ENCODE measurements at regions of chr11 and their contacts with region 1.

Region 1: GRCh38 chr11:58788355-58789023 is 56.0 kb downstream of the GLYATL2 start:
- DNase-seq: peak; percentile 34
- ATAC-seq: peak; percentile 98
- H3K4me3 ChIP-seq: no peak overlapping the region
- H3K27ac ChIP-seq: no peak overlapping the region
- H3K4me1 ChIP-seq: peaks cover 0 to 10% of the 10 kb centered on the region in 2 experiments; a peak in 1 of 4 replicates
- H3K27me3 ChIP-seq: no peaks in the 10 kb centered on the region
- CTCF ChIP-seq: peak; percentile 75 to 95 (median 88); a peak in 5 of 6 replicates
- POLR2A ChIP-seq: no peak
- RAD21 ChIP-seq: peak; percentile 91

Region 2: DNA sequence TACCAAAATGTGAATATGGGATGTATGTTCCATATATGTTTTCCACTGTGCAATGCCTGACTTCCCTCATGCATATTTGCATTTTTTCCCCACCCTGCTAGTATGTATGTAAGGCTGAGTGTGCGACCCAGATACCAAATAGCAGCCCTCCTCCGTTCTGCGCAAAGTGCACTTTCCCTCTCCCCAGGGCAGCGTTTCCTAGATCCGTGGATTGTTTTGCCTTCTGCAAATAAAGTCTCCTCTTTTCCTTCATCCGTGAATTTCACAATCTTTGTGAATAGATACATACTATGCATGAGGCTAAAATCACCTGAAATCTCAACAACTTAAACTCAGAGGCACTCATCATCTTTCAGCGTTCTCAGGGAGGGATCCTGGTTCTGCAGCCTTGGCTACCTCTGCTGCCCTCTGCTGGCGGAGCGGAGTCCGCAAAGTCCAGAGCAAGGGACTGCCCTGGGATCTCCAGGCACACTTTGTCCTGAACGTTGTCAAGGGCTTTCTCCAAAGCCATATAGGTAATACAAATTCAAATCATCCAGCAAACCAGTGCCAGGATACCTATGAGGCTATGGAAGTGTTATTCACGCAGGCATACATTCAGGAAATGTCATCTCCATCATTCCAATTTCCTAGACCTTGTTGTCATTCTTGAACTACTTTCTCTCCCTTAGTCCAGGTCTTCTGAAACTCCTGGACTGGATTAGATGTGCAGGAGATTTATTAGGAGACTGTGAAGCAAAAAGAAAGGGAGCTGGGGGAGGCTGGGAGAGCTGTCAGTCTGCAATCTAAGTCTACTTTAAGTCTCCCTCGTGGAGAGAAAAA is 112.9 kb before region 1 on chr11:
- CTCF ChIA-PET with region 1: no interaction called
- POLR2A ChIA-PET with region 1: no interaction called
- RAD21 ChIA-PET with region 1: no interaction called
- intact Hi-C with region 1: loop called (anchors 1 kb)
- DNase-seq: peak; percentile 51
- ATAC-seq: peak; percentile 99
- H3K4me3 ChIP-seq: no peak overlapping the region
- H3K27ac ChIP-seq: no peak overlapping the region
- H3K4me1 ChIP-seq: no peaks in the 10 kb centered on the region; a peak in 1 of 4 replicates
- H3K27me3 ChIP-seq: no peaks in the 10 kb centered on the region
- CTCF ChIP-seq: peak; percentile 84 to 98 (median 97)
- POLR2A ChIP-seq: no peak
- RAD21 ChIP-seq: peak; percentile 76